CD14-positive monocyte (primary cell): ENCODE measurements at regions of chr10 and their contacts with region 1.

Region 1: DNA sequence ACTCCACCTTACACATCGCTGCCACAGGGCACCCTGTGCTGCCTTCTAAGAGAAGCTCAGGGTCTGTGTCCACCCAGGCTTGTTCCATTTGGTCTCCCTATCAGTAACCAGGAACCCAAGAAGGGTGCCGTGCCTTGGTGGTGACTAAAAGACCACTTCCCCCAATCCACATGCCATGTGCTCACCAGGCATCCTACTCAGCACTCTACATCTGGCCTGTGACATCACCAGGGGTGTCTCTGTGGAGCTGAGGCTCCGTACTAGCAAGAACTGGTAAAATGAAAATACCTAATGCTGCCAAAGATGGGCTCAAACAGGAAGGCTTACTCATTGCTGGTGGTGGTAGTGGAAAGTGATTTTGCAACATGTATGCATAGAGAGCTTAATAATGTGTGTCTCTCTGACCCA is 19.0 kb upstream of the C10orf71 start:
- DNase-seq: peak; percentile 91 to 97 (median 94)
- H3K4me3 ChIP-seq: no peak overlapping the region
- H3K4me3 Mint-ChIP-seq: peak overlapping the region in 1 of 2 donors; percentile 21
- H3K27ac ChIP-seq: peak overlapping the region; percentile 33 to 68
- H3K27ac Mint-ChIP-seq: peak overlapping the region in 6 of 7 donors; percentile 70 to 88 (median 79)
- H3K4me1 ChIP-seq: peaks cover 63 to 70% of the 10 kb centered on the region in 2 donors
- H3K4me1 Mint-ChIP-seq: peaks cover 63% of the 10 kb centered on the region
- H3K27me3 ChIP-seq: no peaks in the 10 kb centered on the region
- H3K27me3 Mint-ChIP-seq: peaks cover 0 to 8% (median 3%) of the 10 kb centered on the region in 3 donors
- CTCF ChIP-seq: no peak

Region 2: DNA sequence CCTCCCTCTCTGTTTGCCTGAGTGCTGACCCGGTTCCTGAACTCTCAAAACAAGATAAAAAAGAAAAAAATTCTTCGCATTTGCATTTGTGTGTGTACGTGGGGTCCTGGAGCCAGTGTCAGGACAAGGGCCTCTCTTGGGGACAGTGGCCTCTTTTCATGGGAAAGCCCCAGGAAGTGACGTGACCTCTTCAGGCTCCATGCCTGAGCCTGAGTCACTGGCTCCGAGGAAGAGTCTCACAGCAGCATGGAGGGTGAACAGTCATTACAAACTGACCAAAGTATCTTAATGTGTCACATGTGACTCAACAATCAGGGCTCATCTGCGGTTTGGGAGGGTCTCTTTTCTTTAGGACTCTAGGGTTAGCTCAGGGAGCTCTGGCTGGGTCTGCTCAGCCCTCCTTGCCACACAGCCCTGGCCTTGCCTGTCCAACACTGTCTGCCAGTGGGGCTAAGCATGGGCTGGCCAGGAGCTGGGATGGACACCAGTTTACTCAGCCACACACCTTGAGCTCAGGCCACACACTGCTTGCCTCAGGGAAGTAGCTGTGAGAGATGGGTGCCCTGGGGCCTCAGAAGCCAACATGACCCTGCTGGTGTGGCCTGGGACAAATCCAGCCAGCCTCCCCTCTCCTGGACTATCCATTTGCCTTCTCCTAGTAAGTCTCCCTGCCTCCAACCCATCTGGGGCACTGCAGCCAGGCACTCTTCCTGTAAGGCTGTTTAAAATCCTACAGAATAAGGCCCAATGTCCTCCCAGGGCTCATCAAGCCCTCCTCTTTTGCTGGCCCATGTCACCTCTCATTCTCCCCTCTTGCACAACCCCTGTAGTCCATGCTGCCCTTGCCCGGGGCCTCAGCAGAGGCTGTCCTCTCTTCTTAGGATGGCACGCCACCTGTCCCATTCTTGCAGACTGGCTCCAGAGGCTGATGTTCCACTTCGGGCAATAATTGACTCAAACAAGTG is 102.3 kb before region 1 on chr10:
- intact Hi-C with region 1: loop called in 1 of 2 experiments (anchors 5 kb)
- DNase-seq: peak; percentile 96 to 99 (median 98)
- H3K4me3 ChIP-seq: no peak overlapping the region
- H3K4me3 Mint-ChIP-seq: peak overlapping the region; percentile 65 to 79
- H3K27ac ChIP-seq: peak overlapping the region; percentile 74 to 93
- H3K27ac Mint-ChIP-seq: peak overlapping the region; percentile 95 to 99 (median 96)
- H3K4me1 ChIP-seq: peaks cover 38 to 43% of the 10 kb centered on the region in 2 donors
- H3K4me1 Mint-ChIP-seq: peaks cover 55% of the 10 kb centered on the region
- H3K27me3 ChIP-seq: no peaks in the 10 kb centered on the region
- H3K27me3 Mint-ChIP-seq: peaks cover 0 to 11% (median 3%) of the 10 kb centered on the region in 3 donors
- CTCF ChIP-seq: no peak

Region 3: GRCh38 chr10:49194212-49194920 is 85.6 kb before region 1 on chr10:
- intact Hi-C with region 1: loop called in 1 of 2 experiments (anchors 5 kb)
- DNase-seq: no peak
- H3K4me3 ChIP-seq: no peak overlapping the region
- H3K4me3 Mint-ChIP-seq: no peak overlapping the region
- H3K27ac ChIP-seq: no peak overlapping the region
- H3K27ac Mint-ChIP-seq: peak overlapping the region in 2 of 7 donors; percentile 36 to 47
- H3K4me1 ChIP-seq: peaks cover 22 to 25% of the 10 kb centered on the region in 2 donors
- H3K4me1 Mint-ChIP-seq: peaks cover 26% of the 10 kb centered on the region
- H3K27me3 ChIP-seq: no peaks in the 10 kb centered on the region
- H3K27me3 Mint-ChIP-seq: peaks cover 3 to 7% (median 4%) of the 10 kb centered on the region in 3 donors
- CTCF ChIP-seq: no peak

Region 4: GRCh38 chr10:49242604-49243003 is 37.4 kb before region 1 on chr10:
- intact Hi-C with region 1: loop called in 1 of 2 experiments (anchors 5 kb)
- DNase-seq: no peak
- H3K4me3 ChIP-seq: peak overlapping the region in 1 of 3 experiments; percentile 3
- H3K4me3 Mint-ChIP-seq: no peak overlapping the region
- H3K27ac ChIP-seq: peak overlapping the region; percentile 57 to 71
- H3K27ac Mint-ChIP-seq: peak overlapping the region in 6 of 7 donors; percentile 80 to 96 (median 87)
- H3K4me1 ChIP-seq: peaks cover 50 to 55% of the 10 kb centered on the region in 2 donors
- H3K4me1 Mint-ChIP-seq: peaks cover 54% of the 10 kb centered on the region
- H3K27me3 ChIP-seq: no peaks in the 10 kb centered on the region
- H3K27me3 Mint-ChIP-seq: peaks cover 0 to 5% (median 0%) of the 10 kb centered on the region in 3 donors
- CTCF ChIP-seq: no peak

Region 5: GRCh38 chr10:49324711-49325110 is 44.7 kb after region 1 on chr10:
- intact Hi-C with region 1: loop called in 1 of 2 experiments (anchors 5 kb)
- DNase-seq: peak in 2 of 3 donors; percentile 59 to 71
- H3K4me3 ChIP-seq: no peak overlapping the region
- H3K4me3 Mint-ChIP-seq: peak overlapping the region in 1 of 2 donors; percentile 1
- H3K27ac ChIP-seq: peak overlapping the region in 1 of 2 donors; percentile 7
- H3K27ac Mint-ChIP-seq: peak overlapping the region in 2 of 7 donors; percentile 0 to 10
- H3K4me1 ChIP-seq: peaks cover 20 to 41% of the 10 kb centered on the region in 2 donors
- H3K4me1 Mint-ChIP-seq: peaks cover 43% of the 10 kb centered on the region
- H3K27me3 ChIP-seq: no peaks in the 10 kb centered on the region
- H3K27me3 Mint-ChIP-seq: peaks cover 2 to 17% (median 4%) of the 10 kb centered on the region in 3 donors
- CTCF ChIP-seq: no peak

Region 6: DNA sequence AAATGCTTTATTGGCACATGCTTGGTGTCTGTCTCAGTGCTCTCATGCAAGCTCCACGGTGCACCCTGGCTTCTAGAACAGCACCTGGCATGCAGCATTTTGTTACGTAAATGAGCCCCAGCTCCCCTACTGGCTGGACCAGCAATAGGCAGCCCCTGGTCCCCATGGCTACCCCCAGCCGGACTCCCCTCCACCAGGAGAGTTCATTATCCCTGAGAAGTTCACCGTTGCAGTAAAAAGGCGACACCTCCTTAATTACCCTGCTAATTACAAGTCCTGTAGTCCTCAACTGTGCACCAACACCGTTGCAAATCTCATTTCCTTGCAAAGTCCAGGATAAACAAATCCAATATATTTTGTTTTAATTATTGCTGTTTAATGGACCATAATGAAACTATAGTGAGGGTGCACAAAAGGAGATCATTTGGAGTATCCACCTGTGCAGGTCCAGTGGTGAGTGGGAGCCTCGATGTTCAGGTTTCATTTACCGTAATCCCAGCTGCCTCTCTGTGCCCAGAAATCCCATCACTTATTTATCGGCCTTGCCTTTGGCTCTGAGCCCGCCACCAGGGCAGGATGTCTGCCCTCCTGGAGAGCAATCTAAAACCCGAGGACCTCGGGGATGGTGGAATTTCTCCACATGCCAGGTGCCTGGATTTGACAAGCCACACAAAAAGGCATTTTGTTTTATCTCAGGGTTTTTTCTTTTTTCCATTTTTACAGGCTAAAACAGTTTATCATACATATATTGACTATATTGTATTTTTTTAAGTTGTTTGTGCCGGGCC is 128.7 kb after region 1 on chr10:
- intact Hi-C with region 1: no loop called
- DNase-seq: no peak
- H3K4me3 ChIP-seq: no peak overlapping the region
- H3K4me3 Mint-ChIP-seq: no peak overlapping the region
- H3K27ac ChIP-seq: no peak overlapping the region
- H3K27ac Mint-ChIP-seq: no peak overlapping the region
- H3K4me1 ChIP-seq: no peaks in the 10 kb centered on the region
- H3K4me1 Mint-ChIP-seq: no peaks in the 10 kb centered on the region
- H3K27me3 ChIP-seq: no peaks in the 10 kb centered on the region
- H3K27me3 Mint-ChIP-seq: peaks cover 8 to 27% (median 16%) of the 10 kb centered on the region in 3 donors
- CTCF ChIP-seq: peak; percentile 36

Region 7: GRCh38 chr10:49667991-49668390 is 388.0 kb after region 1 on chr10:
- intact Hi-C with region 1: no loop called
- DNase-seq: no peak
- H3K4me3 ChIP-seq: no peak overlapping the region
- H3K4me3 Mint-ChIP-seq: no peak overlapping the region
- H3K27ac ChIP-seq: no peak overlapping the region
- H3K27ac Mint-ChIP-seq: no peak overlapping the region
- H3K4me1 ChIP-seq: no peaks in the 10 kb centered on the region
- H3K4me1 Mint-ChIP-seq: no peaks in the 10 kb centered on the region
- H3K27me3 ChIP-seq: no peaks in the 10 kb centered on the region
- H3K27me3 Mint-ChIP-seq: peaks cover 2 to 23% (median 4%) of the 10 kb centered on the region in 3 donors
- CTCF ChIP-seq: no peak